Sciatic nerve (tissue), 2 donors: ENCODE measurements at regions of chr4 and their contacts with region 1.

Region 1: GRCh38 chr4:45640281-45640680 is 483.6 kb downstream of the GABRG1 start:
- DNase-seq: no peak
- ATAC-seq: no peak

Region 2: GRCh38 chr4:45120163-45120562 is 520.1 kb before region 1 on chr4:
- intact Hi-C with region 1: loop called (anchors 5 kb)
- DNase-seq: no peak
- ATAC-seq: no peak

Region 3: DNA sequence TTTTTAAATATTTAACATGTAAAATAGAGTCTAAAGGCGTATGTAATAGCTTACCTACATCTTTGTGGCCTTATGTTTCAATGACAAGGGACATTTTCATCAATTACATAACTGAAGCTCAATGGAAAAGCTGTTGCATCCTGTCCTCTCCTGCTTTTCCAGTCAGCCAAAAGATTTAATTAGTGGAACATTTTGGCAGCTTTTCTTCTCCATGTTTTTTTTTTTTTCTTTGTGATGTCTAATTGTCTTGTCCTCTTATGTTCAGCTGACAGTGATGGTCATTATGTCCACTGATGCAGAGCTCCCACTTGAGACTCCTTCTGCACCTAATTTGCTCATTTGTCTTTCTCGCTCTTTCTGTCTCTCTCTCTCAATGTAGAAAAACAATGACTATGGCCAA is 61.3 kb after region 1 on chr4:
- intact Hi-C with region 1: no loop called
- DNase-seq: no peak
- ATAC-seq: no peak

Region 4: DNA sequence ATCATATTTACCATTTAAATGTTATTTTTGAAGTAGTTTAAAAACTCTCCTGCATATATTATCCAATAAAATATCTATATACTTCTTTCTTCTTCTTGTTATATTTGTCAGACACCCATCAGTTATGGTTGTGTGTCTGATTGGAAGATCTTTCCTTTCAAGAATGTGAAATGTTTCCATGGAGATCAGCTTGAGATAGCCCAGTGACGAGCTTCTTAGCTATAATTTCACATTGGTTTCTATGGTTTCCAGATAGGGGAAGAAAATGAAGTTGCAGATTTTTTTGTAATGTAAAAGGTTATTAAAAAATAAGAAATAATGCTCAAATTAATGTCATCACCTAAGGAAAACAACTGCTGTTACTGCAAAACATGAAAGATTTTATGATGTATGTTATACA is 1079.8 kb after region 1 on chr4:
- intact Hi-C with region 1: no loop called
- DNase-seq: no peak
- ATAC-seq: no peak